Lower leg skin (tissue), 4 donors: ENCODE measurements at regions of chr12 and their contacts with region 1.

Region 1: GRCh38 chr12:47837190-47838171 is 17.8 kb upstream of the HDAC7 start:
- DNase-seq: peak in 1 of 2 donors; percentile 93
- H3K4me3 ChIP-seq: no peak overlapping the region
- CTCF ChIP-seq: peak in 1 of 3 donors; percentile 68
- POLR2A ChIP-seq: no peak

Region 2: DNA sequence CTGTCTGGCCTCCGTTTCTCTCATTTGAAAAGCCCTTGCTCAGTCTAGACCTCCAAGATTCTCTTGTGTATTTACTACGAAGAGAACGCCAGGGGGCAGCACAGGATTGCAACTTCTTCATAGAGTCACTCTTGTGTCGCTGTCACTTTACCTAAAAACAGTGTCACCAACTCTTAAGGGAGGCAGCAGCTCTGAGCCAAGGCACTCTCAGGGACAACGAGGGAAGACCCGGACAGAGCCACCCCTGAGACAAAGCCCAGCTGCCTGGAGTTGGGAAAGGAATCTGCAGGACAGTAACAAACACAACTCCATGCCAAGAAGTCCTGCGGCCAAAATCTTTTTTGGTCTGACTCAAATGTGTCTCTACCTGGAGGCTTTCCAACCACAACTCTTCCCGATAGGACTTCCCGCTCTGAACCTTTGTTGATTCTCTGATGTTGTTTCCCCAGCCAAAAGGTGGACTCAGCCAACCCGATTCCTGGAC is 122.0 kb before region 1 on chr12:
- intact Hi-C with region 1: loop called (anchors 5 kb)
- DNase-seq: peak; percentile 78 to 96
- H3K4me3 ChIP-seq: no peak overlapping the region
- CTCF ChIP-seq: peak in 1 of 3 donors; percentile 70
- POLR2A ChIP-seq: no peak

Region 3: GRCh38 chr12:47742253-47742825 is 95.1 kb before region 1 on chr12:
- intact Hi-C with region 1: loop called (anchors 5 kb)
- DNase-seq: peak; percentile 49 to 94
- H3K4me3 ChIP-seq: no peak overlapping the region
- CTCF ChIP-seq: peak in 1 of 3 donors; percentile 75
- POLR2A ChIP-seq: no peak

Region 4: DNA sequence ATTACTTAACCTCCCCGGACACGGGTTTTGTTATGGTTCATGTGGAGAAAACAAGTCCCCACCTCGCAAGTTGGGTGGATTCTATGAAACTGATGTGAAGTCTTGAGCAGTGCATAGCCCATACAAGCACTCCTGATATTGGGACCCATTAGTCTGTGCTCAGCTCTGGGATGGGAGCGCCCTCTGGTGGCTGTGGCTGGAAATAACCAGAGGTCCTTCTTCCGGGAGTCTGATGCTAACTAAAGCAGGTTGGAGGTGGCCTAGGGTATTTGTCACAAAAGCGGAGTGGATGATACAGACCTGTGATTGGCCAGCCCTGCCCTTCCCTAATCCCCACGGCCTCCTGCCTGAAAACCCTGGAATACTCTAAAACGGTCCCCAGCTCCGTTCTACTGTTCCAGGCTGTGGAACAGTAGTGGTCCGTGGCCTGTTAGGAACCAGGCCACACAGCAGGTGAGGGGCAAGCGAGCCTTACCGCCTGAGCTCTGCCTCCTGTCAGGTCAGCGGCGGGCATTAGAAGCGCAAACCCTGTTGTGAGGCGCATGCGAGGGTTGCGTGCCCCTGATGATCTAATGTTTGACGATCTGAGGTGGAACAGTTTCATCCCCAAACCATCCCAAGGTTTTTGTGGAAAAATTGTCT is 58.1 kb before region 1 on chr12:
- intact Hi-C with region 1: loop called (anchors 5 kb)
- DNase-seq: peak; percentile 90 to 98
- H3K4me3 ChIP-seq: no peak overlapping the region
- CTCF ChIP-seq: peak in 1 of 3 donors; percentile 87
- POLR2A ChIP-seq: no peak

Region 5: GRCh38 chr12:47797441-47797840 is 40.0 kb before region 1 on chr12:
- intact Hi-C with region 1: loop called (anchors 5 kb)
- DNase-seq: no peak
- H3K4me3 ChIP-seq: no peak overlapping the region
- CTCF ChIP-seq: no peak
- POLR2A ChIP-seq: no peak